ENCODE measurements at regions of chr9 and their contacts with region 1.

Region 1: DNA sequence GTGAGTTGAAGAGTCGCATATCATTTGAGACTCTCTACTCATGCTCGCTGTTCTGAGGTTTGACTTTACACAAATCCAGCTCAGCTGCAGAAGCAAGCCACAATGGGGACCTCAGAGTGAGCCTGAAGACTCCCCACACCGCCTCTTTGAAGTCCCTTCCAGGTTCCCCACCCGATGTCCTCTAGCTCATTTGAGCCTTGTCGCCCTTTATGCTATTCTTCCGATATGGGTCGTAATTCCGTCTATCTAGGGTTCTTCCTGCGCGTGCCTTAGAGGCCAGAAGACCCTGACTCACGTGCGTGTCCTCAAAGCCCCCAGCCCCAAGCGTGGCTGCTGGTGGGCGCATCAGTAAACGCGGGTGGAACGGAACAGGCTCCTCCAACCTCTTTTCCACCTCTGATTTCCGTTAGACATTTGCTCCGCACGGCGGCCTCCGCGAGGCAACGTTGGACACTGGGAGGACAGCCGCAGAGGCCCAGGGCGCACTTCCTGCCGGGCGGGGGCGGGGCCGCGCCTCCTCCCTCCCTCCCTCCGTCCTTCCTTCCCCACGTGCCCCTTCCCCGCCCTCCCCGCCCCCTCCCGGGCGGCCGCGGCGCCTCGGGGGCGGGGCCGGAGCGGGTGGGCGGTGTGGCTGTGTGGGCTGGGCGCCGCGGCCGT is at the start of gene SNX30:
- DNase-seq: peak; percentile 97
- H3K4me3 ChIP-seq: peak within 1 kb of the TSS; percentile 78 to 98 (median 86)
- H3K27ac ChIP-seq: peak within 1 kb of the TSS; percentile 73 to 93 (median 86)
- H3K4me1 ChIP-seq: peaks cover 0 to 71% (median 55%) of the 10 kb centered on the region in 6 donors
- H3K27me3 ChIP-seq: no peaks in the 10 kb centered on the region
- CTCF ChIP-seq: peak in 5 of 11 experiments; percentile 10 to 46 (median 16)
- POLR2A ChIP-seq: peak in 1 of 3 donors; percentile 49
- total RNA-seq, gene SNX30: 10.1 to 23.3 (median 18.0) TPM

Region 2: GRCh38 chr9:112717661-112718341 is 32.4 kb before region 1 on chr9 and contains the start of gene INIP:
- intact Hi-C with region 1: loop called (anchors 5 kb)
- DNase-seq: peak; percentile 99
- H3K4me3 ChIP-seq: peak within 1 kb of the TSS; percentile 56 to 84 (median 74)
- H3K27ac ChIP-seq: peak within 1 kb of the TSS; percentile 84 to 96 (median 94)
- H3K4me1 ChIP-seq: peaks cover 10 to 47% (median 25%) of the 10 kb centered on the region in 6 donors
- H3K27me3 ChIP-seq: no peaks in the 10 kb centered on the region
- CTCF ChIP-seq: peak in 5 of 11 experiments; percentile 4 to 46 (median 31)
- POLR2A ChIP-seq: peak in 2 of 3 donors; percentile 63 to 66
- total RNA-seq, gene INIP: 23.0 to 33.4 (median 26.8) TPM

Region 3: GRCh38 chr9:112831281-112831851 is 81.1 kb after region 1 on chr9:
- intact Hi-C with region 1: no loop called
- DNase-seq: peak; percentile 81
- H3K4me3 ChIP-seq: no peak overlapping the region
- H3K27ac ChIP-seq: peak overlapping the region in 2 of 8 donors; percentile 39 to 48
- H3K4me1 ChIP-seq: peaks cover 6 to 20% (median 15%) of the 10 kb centered on the region in 6 donors
- H3K27me3 ChIP-seq: no peaks in the 10 kb centered on the region
- CTCF ChIP-seq: no peak
- POLR2A ChIP-seq: no peak

Measured in spleen (tissue), 13 donors.